ENCODE measurements at regions of chr20 and their contacts with region 1.

Region 1: GRCh38 chr20:57498425-57499400 is 26.2 kb downstream of the CTCFL start:
- DNase-seq: no peak
- H3K4me3 ChIP-seq: no peak overlapping the region
- H3K27ac ChIP-seq: no peak overlapping the region
- H3K4me1 ChIP-seq: peaks cover 0 to 15% (median 7%) of the 10 kb centered on the region in 4 donors
- H3K27me3 ChIP-seq: no peaks in the 10 kb centered on the region
- CTCF ChIP-seq: peak in 2 of 5 experiments; percentile 18 to 31
- EP300 ChIP-seq: no peak
- POLR2A ChIP-seq: no peak

Region 2: DNA sequence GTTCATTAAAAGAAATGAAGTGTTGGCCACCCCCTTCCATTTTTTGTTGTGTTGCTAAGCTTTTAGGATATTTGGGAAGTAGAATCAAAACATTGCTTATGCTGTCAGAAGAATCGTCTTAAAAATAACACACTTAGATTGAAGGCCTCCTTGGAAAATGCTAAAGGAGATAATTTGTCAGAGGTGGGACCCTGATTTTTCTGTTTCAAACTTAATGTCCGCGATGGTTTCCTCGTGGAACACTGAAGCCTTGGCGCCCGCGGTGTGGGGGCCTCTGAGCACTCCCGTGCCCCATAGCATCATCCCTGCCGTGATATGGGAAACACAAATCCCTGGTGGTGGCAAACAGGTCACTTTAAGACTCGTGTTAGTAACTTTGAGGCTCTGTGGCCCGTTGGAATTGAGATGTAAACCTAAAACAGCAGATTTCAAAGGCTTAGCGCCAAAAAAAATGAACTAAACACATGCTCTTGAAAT is 116.6 kb before region 1 on chr20:
- in situ Hi-C with region 1: loop called (anchors 5 to 10 kb)
- intact Hi-C with region 1: loop called (anchors 1 kb)
- DNase-seq: no peak
- H3K4me3 ChIP-seq: no peak overlapping the region
- H3K27ac ChIP-seq: peak overlapping the region in 1 of 4 donors; percentile 0
- H3K4me1 ChIP-seq: peaks cover 5 to 36% (median 31%) of the 10 kb centered on the region in 4 donors
- H3K27me3 ChIP-seq: no peaks in the 10 kb centered on the region
- CTCF ChIP-seq: peak in 1 of 5 experiments; percentile 7
- EP300 ChIP-seq: no peak
- POLR2A ChIP-seq: no peak

Region 3: DNA sequence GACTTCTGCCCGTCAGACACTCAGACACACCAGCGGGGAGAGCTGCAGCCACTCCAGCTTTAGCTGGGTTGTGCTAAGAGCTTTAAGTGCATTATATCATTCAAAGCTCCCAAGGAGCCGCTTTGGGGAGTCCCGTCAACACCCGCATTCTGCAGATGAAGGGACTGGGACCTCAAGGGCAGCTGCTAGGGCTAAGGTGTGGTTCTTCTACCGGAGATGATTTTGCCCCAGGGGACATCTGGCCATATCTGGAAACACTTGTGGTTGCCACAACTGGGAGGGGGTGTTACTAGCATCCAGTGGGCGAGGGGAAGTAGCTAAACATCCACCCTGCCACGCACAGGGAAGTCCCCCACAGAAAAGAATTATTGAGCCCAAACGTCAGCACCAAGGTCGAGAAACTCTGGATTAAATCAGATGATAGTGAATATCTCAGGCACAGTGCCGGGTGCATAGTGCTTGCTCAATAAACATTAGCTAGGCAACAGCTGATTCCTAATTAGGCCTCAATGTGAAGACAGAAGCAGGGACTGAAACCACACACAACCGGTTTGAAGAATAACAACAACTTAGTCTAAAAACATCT is 181.5 kb after region 1 on chr20:
- in situ Hi-C with region 1: no loop called
- intact Hi-C with region 1: no loop called
- DNase-seq: peak; percentile 37
- H3K4me3 ChIP-seq: no peak overlapping the region
- H3K27ac ChIP-seq: peak overlapping the region; percentile 2 to 72 (median 41)
- H3K4me1 ChIP-seq: peaks cover 9 to 49% (median 34%) of the 10 kb centered on the region in 4 donors
- H3K27me3 ChIP-seq: no peaks in the 10 kb centered on the region
- CTCF ChIP-seq: no peak
- EP300 ChIP-seq: no peak
- POLR2A ChIP-seq: no peak